Lower leg skin (tissue), 4 donors: ENCODE measurements at regions of chr6 and their contacts with region 1.

Region 1: GRCh38 chr6:63928613-63929012 is 293.0 kb downstream of the PHF3 start:
- DNase-seq: no peak
- H3K4me3 ChIP-seq: no peak overlapping the region
- CTCF ChIP-seq: no peak
- POLR2A ChIP-seq: no peak

Region 2: GRCh38 chr6:63395402-63395801 is 533.2 kb before region 1 on chr6:
- intact Hi-C with region 1: no loop called
- DNase-seq: no peak
- H3K4me3 ChIP-seq: no peak overlapping the region
- CTCF ChIP-seq: no peak
- POLR2A ChIP-seq: no peak

Region 3: GRCh38 chr6:63910863-63911551 is 17.6 kb before region 1 on chr6:
- intact Hi-C with region 1: loop called (anchors 1 kb)
- DNase-seq: no peak
- H3K4me3 ChIP-seq: no peak overlapping the region
- CTCF ChIP-seq: no peak
- POLR2A ChIP-seq: no peak